ENCODE measurements at regions of chr13 and their contacts with region 1.

Region 1: GRCh38 chr13:67238277-67238859 is 8.2 kb upstream of the PCDH9 start:
- DNase-seq: no peak
- ATAC-seq: peak; percentile 55
- H3K4me3 Mint-ChIP-seq: no peak overlapping the region
- H3K27ac Mint-ChIP-seq: no peak overlapping the region
- H3K4me1 Mint-ChIP-seq: no peaks in the 10 kb centered on the region
- H3K27me3 Mint-ChIP-seq: no peaks in the 10 kb centered on the region
- CTCF ChIP-seq: peak; percentile 77

Region 2: GRCh38 chr13:67090856-67091255 is 147.5 kb before region 1 on chr13:
- CTCF ChIA-PET with region 1: no interaction called
- POLR2A ChIA-PET with region 1: no interaction called
- intact Hi-C with region 1: loop called (anchors 5 kb)
- DNase-seq: no peak
- ATAC-seq: no peak
- H3K4me3 Mint-ChIP-seq: no peak overlapping the region
- H3K27ac Mint-ChIP-seq: no peak overlapping the region
- H3K4me1 Mint-ChIP-seq: no peaks in the 10 kb centered on the region
- H3K27me3 Mint-ChIP-seq: no peaks in the 10 kb centered on the region
- CTCF ChIP-seq: no peak

Measured in activated CD8-positive, alpha-beta T cell treated with anti-CD3 and anti-CD28 coated beads for 36 hours (primary cell).